K562 (cell line): ENCODE measurements at regions of chr11 and their contacts with region 1.

Region 1: GRCh38 chr11:66008468-66009101 is 3.2 kb upstream of the CST6 start:
- DNase-seq: no peak
- ATAC-seq: no peak
- H3K4me3 ChIP-seq: no peak overlapping the region
- H3K27ac ChIP-seq: no peak overlapping the region
- H3K4me1 ChIP-seq: peaks cover 30 to 42% of the 10 kb centered on the region in 2 experiments
- H3K27me3 ChIP-seq: no peaks in the 10 kb centered on the region
- CTCF ChIP-seq: no peak
- EP300 ChIP-seq: no peak
- POLR2A ChIP-seq: no peak
- RAD21 ChIP-seq: no peak

Region 2: GRCh38 chr11:66022401-66023185 is 14.0 kb after region 1 on chr11:
- CTCF ChIA-PET with region 1: no interaction called
- POLR2A ChIA-PET with region 1: interaction called, 13 read pairs
- in situ Hi-C with region 1: no loop called
- intact Hi-C with region 1: no loop called
- DNase-seq: peak; percentile 87 to 90 (median 90)
- ATAC-seq: peak; percentile 94
- H3K4me3 ChIP-seq: peak overlapping the region; percentile 26; the same call in 1 of the 2 replicates
- H3K27ac ChIP-seq: no peak overlapping the region; the same call in 2 of the 3 replicates
- H3K4me1 ChIP-seq: peaks cover 13 to 53% of the 10 kb centered on the region in 2 experiments
- H3K27me3 ChIP-seq: no peaks in the 10 kb centered on the region
- CTCF ChIP-seq: peak; percentile 93 to 96 (median 94)
- EP300 ChIP-seq: no peak
- POLR2A ChIP-seq: no peak
- RAD21 ChIP-seq: peak; percentile 78 to 87